Heart right ventricle (tissue), 16 donors: ENCODE measurements at regions of chr21 and their contacts with region 1.

Region 1: DNA sequence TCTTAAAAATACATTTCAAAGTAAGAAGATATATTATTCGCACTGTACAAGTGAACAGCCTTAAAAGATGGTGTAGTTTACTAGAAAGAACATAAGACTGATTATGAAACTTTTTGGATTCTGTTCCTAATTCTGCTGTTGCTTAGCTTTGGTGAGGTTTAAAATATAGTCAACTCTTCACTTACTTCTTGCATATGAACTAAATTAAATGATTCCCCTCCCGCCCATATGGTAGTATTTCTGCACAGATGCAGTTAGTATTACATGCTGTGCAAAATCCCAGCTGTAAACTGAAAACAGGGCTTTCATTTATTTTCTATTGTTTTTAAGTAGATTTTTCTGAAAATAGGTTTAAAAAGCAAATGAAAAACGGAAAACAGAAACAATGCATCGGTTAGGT is 345.4 kb upstream of the NCAM2 start:
- DNase-seq: no peak
- ATAC-seq: no peak
- H3K4me3 ChIP-seq: no peak overlapping the region
- H3K27ac ChIP-seq: no peak overlapping the region
- H3K4me1 ChIP-seq: no peaks in the 10 kb centered on the region
- H3K27me3 ChIP-seq: no peaks in the 10 kb centered on the region
- CTCF ChIP-seq: no peak

Region 2: GRCh38 chr21:20591284-20591683 is 61.6 kb before region 1 on chr21:
- intact Hi-C with region 1: loop called in 1 of 10 experiments (anchors 10 kb)
- DNase-seq: no peak
- ATAC-seq: no peak
- H3K4me3 ChIP-seq: no peak overlapping the region
- H3K27ac ChIP-seq: no peak overlapping the region
- H3K4me1 ChIP-seq: no peaks in the 10 kb centered on the region
- H3K27me3 ChIP-seq: no peaks in the 10 kb centered on the region
- CTCF ChIP-seq: no peak